ENCODE measurements at regions of chr6 and their contacts with region 1.

Region 1: GRCh38 chr6:166950443-166950821 is 5.9 kb downstream of the RNASET2 start:
- H3K4me3 ChIP-seq: no peak overlapping the region
- H3K27ac ChIP-seq: no peak overlapping the region
- H3K4me1 ChIP-seq: no peaks in the 10 kb centered on the region
- CTCF ChIP-seq: no peak

Region 2: DNA sequence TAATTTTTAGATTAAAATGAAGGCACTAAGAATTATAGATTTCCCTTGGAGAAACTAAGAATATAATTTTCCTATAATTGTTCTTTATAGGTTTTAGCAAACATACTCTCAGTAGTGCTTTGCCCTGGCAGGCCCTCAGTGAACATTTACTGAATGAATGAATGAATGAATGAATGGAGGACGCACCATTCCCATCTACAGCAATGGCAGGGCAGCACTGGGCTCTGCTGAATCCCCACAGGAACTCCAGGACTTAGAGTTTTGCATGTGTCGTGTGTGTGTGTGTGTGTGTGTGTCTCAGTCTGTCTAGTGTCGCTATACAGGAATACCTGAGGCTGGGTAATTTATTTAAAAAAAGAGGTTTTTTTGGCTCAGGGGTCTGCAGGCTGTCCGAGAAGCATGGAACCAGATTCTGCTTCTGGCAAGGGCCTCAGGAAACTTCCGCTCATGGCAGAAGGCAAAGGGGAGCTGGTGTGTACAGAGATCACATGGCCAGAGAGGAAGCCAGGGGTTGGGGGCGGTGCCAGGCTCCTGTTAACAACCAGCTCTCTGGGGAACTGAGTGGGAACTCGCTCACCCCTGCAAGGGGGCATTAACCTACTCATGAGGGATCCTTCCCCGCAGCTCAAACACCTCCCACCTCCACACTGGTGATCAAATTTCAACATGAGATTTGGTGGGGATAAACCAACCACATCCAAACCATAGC is 14.2 kb before region 1 on chr6:
- CTCF ChIA-PET with region 1: interaction called, 26 read pairs
- POLR2A ChIA-PET with region 1: no interaction called
- H3K4me3 ChIP-seq: no peak overlapping the region
- H3K27ac ChIP-seq: no peak overlapping the region
- H3K4me1 ChIP-seq: no peaks in the 10 kb centered on the region
- CTCF ChIP-seq: no peak

Region 3: GRCh38 chr6:167034056-167034455 is 83.6 kb after region 1 on chr6:
- CTCF ChIA-PET with region 1: no interaction called
- POLR2A ChIA-PET with region 1: no interaction called
- H3K4me3 ChIP-seq: no peak overlapping the region
- H3K27ac ChIP-seq: no peak overlapping the region
- H3K4me1 ChIP-seq: no peaks in the 10 kb centered on the region
- CTCF ChIP-seq: no peak

Region 4: DNA sequence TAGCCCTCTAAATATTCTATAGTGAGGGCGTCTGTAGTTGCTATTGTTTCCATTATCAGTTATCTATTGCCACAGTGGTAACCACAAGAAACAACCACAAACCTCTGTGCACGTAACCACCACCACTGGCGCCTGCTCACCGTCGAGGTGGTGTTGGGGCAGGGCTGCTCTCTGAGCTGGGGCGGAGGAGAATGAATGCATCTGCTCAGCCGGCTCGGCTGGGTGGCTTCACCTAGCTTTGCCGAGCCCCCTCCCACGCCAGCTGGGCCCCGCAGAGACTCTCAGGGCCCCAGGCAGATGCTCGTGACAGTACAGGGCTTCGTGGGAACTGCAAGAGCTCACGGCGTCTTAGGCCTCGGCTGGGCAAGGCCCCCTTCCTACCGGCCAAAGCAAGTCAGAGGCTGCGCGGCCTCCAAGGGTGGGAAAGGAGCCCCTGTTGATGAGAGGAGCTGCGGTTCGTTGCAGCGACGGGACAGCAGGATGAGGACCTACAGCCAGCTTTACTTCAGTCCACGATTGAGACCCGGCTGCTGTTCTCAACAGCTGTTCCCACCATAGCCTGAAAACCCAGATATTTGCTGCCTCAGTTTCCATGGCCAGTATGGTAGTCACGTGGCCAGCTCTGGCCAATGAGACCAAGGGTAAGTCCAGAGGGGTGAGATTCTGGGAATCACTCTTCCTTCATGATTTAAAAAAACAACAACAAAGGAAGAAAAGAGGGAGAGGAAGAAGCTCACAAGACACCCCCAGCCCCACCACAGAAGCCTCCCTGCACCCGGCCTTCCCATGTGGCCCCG is 756.1 kb after region 1 on chr6:
- CTCF ChIA-PET with region 1: no interaction called
- POLR2A ChIA-PET with region 1: no interaction called
- H3K4me3 ChIP-seq: no peak overlapping the region
- H3K27ac ChIP-seq: no peak overlapping the region
- H3K4me1 ChIP-seq: no peaks in the 10 kb centered on the region
- CTCF ChIP-seq: no peak